Transverse colon (tissue), 4 donors: ENCODE measurements at regions of chr20 and their contacts with region 1.

Region 1: DNA sequence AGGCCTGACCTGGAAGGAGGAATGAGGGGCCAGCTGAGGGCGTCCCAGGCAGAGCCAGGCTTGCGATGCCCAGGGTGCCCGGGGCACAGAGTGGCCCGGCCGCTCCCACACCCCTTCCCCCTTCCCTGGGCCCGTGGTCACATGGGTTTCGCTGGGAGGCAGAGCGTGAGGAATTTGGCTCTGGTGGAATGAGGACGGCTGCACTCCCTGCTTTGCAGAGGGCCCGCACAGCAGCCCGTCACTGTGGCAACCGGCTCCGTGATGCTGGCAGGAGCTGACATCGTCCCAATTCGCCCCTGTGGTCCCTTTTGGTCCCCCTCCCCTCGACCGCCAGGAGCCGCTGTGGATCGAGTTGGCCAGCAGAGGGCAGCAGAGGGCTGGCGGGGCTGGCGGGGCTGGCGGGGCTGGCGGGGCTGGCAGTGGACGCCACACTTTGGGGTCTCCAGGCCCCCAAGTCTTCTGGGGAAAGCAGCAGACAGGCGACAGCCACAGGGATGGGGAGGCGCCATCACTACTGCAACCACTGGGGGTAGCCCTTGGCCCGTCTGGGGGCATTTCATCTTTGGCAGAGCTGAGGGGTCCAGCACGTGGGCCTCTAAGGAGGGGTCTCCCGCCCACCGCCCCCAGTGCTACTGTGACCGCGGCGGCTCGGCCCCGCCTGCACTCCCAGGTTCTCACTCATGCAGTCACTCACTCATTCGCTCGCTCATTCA is 49.6 kb upstream of the BHLHE23 start:
- DNase-seq: peak; percentile 24
- H3K4me3 ChIP-seq: no peak overlapping the region
- H3K27ac ChIP-seq: no peak overlapping the region
- H3K4me1 ChIP-seq: no peaks in the 10 kb centered on the region
- H3K27me3 ChIP-seq: peaks cover 51% of the 10 kb centered on the region
- CTCF ChIP-seq: peak; percentile 72 to 90 (median 88)
- EP300 ChIP-seq: no peak
- POLR2A ChIP-seq: no peak

Region 2: GRCh38 chr20:62668441-62669027 is 387.9 kb before region 1 on chr20:
- in situ Hi-C with region 1: no loop called
- intact Hi-C with region 1: no loop called
- DNase-seq: peak; percentile 81
- H3K4me3 ChIP-seq: no peak overlapping the region
- H3K27ac ChIP-seq: peak overlapping the region in 1 of 4 donors; percentile 81
- H3K4me1 ChIP-seq: peaks cover 8 to 26% (median 20%) of the 10 kb centered on the region in 4 donors
- H3K27me3 ChIP-seq: no peaks in the 10 kb centered on the region
- CTCF ChIP-seq: peak; percentile 81 to 92 (median 86)
- EP300 ChIP-seq: no peak
- POLR2A ChIP-seq: no peak

Region 3: DNA sequence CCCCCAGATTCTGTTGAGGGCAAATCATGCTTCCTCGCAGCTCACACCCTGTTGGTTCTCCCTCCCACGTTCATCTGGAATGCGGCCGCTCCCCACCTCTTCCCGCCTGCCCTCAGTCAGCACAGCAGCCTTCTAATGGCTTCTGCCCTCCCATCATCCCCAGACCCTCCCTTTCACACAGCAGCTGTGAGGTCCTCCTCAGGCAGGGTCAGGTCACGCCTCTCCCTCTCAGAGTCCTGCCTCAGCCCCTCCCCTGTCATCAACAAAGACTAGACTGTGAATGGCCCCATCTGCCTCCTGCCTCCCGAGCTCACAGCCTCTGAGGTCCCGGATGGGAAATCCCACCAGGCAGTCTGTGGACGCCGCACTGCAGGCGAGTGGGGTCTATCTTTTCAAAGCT is 41.7 kb before region 1 on chr20:
- in situ Hi-C with region 1: no loop called
- intact Hi-C with region 1: no loop called
- DNase-seq: no peak
- H3K4me3 ChIP-seq: no peak overlapping the region
- H3K27ac ChIP-seq: no peak overlapping the region
- H3K4me1 ChIP-seq: no peaks in the 10 kb centered on the region
- H3K27me3 ChIP-seq: peaks cover 97% of the 10 kb centered on the region
- CTCF ChIP-seq: no peak
- EP300 ChIP-seq: no peak
- POLR2A ChIP-seq: no peak

Region 4: DNA sequence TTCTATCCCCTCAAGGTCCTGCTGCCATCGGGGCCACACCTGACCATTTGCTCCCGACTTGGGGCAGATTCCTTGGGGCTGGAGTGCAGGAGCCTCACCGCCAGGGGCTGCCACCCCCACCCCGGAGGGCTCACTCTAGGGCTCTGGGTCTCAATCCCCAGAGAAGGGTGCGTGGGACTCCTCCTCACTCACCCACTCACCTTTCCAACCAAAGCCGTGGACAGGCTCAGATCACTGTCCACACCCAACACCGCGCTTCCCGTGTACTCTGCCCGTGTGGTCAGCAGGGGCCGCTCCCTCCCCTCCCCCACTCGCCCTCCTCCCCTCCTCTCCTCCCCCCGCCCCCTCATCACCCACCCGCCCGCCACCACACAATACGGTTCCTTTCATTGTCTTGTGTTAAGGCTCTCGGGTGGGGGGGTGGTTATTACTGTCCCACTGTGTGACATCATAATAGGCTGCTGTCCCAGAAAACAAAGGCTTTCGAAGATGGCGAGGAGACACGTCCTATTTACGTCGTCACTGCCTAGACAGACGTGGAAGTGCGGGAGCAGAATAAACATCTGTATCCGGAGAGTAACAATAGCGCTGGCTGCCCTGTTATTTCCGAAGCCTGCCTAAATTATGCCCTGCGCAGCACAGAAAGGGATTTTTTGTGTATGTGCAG is 73.7 kb after region 1 on chr20:
- in situ Hi-C with region 1: no loop called
- intact Hi-C with region 1: no loop called
- DNase-seq: no peak
- H3K4me3 ChIP-seq: no peak overlapping the region
- H3K27ac ChIP-seq: no peak overlapping the region
- H3K4me1 ChIP-seq: no peaks in the 10 kb centered on the region
- H3K27me3 ChIP-seq: peaks cover 39% of the 10 kb centered on the region
- CTCF ChIP-seq: no peak
- EP300 ChIP-seq: no peak
- POLR2A ChIP-seq: no peak

Region 5: GRCh38 chr20:63178889-63179686 is 122.7 kb after region 1 on chr20:
- in situ Hi-C with region 1: no loop called
- intact Hi-C with region 1: loop called (anchors 5 kb)
- DNase-seq: peak; percentile 33
- H3K4me3 ChIP-seq: peak overlapping the region in 1 of 4 donors; percentile 35
- H3K27ac ChIP-seq: no peak overlapping the region
- H3K4me1 ChIP-seq: peaks cover 0 to 33% (median 19%) of the 10 kb centered on the region in 4 donors
- H3K27me3 ChIP-seq: peaks cover 83% of the 10 kb centered on the region
- CTCF ChIP-seq: peak in 4 of 5 experiments; percentile 30 to 52 (median 34)
- EP300 ChIP-seq: no peak
- POLR2A ChIP-seq: no peak

Region 6: GRCh38 chr20:63223221-63224207 is 167.1 kb after region 1 on chr20:
- in situ Hi-C with region 1: no loop called
- intact Hi-C with region 1: loop called (anchors 5 kb)
- DNase-seq: peak; percentile 36
- H3K4me3 ChIP-seq: no peak overlapping the region
- H3K27ac ChIP-seq: no peak overlapping the region
- H3K4me1 ChIP-seq: peaks cover 0 to 9% (median 6%) of the 10 kb centered on the region in 4 donors
- H3K27me3 ChIP-seq: peaks cover 5% of the 10 kb centered on the region
- CTCF ChIP-seq: peak; percentile 59 to 69 (median 68)
- EP300 ChIP-seq: no peak
- POLR2A ChIP-seq: no peak

Region 7: DNA sequence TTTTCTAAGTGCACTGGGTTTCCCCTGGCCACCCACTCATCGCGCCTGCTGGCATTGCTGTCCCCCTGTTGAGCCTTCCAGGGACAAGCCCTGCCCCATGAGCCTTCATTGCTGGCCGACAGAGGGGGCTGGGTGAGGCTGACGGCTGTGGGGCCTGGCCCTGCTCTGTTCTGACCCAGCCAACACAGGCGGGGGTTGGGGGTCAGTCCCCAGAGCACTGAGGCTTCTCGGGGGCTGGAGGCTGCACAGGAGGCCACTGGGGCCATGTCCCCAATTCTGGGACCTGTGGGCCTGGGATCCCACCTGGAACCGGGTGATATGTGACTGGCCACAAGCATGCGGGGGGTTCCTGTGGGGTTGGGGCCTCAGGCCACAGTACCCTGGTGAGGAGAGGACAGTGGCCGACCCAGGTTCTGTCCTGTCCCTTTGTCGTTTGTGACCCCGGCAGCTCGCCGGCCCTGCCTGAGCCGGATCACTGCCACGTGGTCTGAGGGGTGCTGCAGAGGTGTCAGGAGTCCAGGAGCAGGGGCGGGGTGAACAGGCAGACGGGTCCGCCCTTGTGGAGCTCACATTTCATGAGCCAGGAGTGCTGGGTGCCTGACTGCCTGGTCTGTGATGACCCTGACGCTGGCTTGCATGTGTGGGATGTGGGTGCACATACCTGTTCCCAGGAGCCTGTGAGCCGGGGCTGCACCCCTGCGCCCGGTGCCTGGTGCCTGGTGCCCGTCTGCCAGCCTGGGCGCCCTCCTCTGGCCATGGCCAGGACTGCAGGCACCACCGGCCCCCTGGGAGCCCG is 234.5 kb after region 1 on chr20:
- in situ Hi-C with region 1: no loop called
- intact Hi-C with region 1: no loop called
- DNase-seq: peak; percentile 41
- H3K4me3 ChIP-seq: no peak overlapping the region
- H3K27ac ChIP-seq: no peak overlapping the region
- H3K4me1 ChIP-seq: peaks cover 0 to 5% (median 0%) of the 10 kb centered on the region in 4 donors
- H3K27me3 ChIP-seq: peaks cover 30% of the 10 kb centered on the region
- CTCF ChIP-seq: peak; percentile 48 to 74 (median 69)
- EP300 ChIP-seq: no peak
- POLR2A ChIP-seq: no peak